Sigmoid colon (tissue), 7 donors: ENCODE measurements at regions of chr1 and their contacts with region 1.

Region 1: DNA sequence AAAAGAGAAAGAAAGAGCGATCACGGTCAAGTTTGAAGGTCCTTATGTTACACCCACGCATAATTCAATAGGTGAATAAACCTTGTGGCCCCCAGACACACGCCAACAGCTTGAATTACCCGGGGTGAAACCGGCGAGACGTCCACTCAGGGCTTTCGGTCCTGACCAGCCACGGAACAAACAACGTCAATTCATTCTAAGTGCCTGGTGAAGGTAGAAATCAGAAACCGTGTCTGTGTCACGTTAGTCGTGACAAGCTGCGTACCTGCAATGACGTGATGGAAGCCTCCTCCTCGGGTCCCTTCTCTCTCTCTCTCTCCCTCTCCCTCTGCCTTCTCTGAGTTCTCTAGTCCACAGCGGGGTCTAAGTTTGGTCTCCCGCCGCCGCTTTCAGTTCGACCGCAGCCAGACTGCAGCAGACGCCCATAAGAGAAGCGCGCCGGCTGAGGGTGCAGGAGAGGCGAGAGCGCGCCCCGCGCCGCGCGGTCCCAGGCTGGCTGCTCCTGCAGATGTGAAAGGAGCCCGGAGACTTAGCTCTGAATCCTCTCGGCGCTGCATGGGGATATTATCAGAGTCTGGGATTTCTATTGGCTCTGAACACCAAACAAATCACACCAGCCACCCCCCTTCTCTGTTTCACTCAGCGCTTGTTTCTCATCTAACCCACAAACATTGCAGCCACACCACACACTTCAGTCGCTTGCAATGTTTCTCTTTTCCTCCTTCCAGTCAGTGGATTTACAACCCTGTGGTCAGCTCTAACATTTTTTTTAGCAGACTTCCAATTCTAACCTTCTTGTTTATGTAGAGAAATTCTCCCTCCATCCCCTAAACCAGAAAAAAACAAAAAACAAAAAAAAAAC is at the start of gene GREM2:
- DNase-seq: peak; percentile 83
- H3K4me3 ChIP-seq: peak within 1 kb of the TSS; percentile 54 to 64 (median 58)
- H3K27ac ChIP-seq: peak within 1 kb of the TSS; percentile 50 to 77 (median 72)
- H3K4me1 ChIP-seq: peaks cover 0 to 36% (median 17%) of the 10 kb centered on the region in 4 donors
- H3K27me3 ChIP-seq: no peaks in the 10 kb centered on the region
- CTCF ChIP-seq: no peak
- EP300 ChIP-seq: no peak
- POLR2A ChIP-seq: peak; percentile 41 to 54
- total RNA-seq, gene GREM2: 9.4 to 18.7 (median 13.9) TPM

Region 2: GRCh38 chr1:240027059-240027462 is 584.8 kb before region 1 on chr1:
- intact Hi-C with region 1: loop called (anchors 10 kb)
- DNase-seq: no peak
- H3K4me3 ChIP-seq: no peak overlapping the region
- H3K27ac ChIP-seq: no peak overlapping the region
- H3K4me1 ChIP-seq: peaks cover 0 to 6% (median 0%) of the 10 kb centered on the region in 4 donors
- H3K27me3 ChIP-seq: no peaks in the 10 kb centered on the region
- CTCF ChIP-seq: peak; percentile 59 to 85 (median 78)
- EP300 ChIP-seq: no peak
- POLR2A ChIP-seq: no peak

Region 3: GRCh38 chr1:240344918-240345317 is 266.9 kb before region 1 on chr1:
- intact Hi-C with region 1: loop called (anchors 10 kb)
- DNase-seq: no peak
- H3K4me3 ChIP-seq: no peak overlapping the region
- H3K27ac ChIP-seq: peak overlapping the region in 1 of 4 donors; percentile 75
- H3K4me1 ChIP-seq: peaks cover 0 to 37% (median 19%) of the 10 kb centered on the region in 4 donors
- H3K27me3 ChIP-seq: no peaks in the 10 kb centered on the region
- CTCF ChIP-seq: no peak
- EP300 ChIP-seq: no peak
- POLR2A ChIP-seq: no peak

Region 4: DNA sequence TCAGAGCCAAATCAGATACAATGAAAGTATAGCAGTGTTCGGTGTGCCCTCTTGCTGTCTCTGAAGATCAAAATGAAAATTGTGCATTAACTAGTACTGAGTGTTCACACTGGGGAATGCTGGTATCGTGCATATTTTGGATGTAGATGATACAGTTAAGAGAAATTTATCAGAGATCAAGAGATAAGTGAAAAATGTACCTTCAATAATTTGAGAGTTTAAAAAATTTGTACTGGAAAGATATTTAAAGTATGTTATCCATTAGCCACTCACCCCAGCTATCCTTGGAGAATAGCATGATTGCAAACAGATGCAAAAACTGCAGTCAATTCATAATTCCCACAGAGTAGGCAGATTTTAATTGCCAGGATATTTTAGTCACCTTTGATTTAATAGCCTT is 56.3 kb before region 1 on chr1:
- intact Hi-C with region 1: no loop called
- DNase-seq: no peak
- H3K4me3 ChIP-seq: no peak overlapping the region
- H3K27ac ChIP-seq: no peak overlapping the region
- H3K4me1 ChIP-seq: peaks cover 0 to 5% (median 2%) of the 10 kb centered on the region in 4 donors
- H3K27me3 ChIP-seq: no peaks in the 10 kb centered on the region
- CTCF ChIP-seq: no peak
- EP300 ChIP-seq: no peak
- POLR2A ChIP-seq: no peak

Region 5: DNA sequence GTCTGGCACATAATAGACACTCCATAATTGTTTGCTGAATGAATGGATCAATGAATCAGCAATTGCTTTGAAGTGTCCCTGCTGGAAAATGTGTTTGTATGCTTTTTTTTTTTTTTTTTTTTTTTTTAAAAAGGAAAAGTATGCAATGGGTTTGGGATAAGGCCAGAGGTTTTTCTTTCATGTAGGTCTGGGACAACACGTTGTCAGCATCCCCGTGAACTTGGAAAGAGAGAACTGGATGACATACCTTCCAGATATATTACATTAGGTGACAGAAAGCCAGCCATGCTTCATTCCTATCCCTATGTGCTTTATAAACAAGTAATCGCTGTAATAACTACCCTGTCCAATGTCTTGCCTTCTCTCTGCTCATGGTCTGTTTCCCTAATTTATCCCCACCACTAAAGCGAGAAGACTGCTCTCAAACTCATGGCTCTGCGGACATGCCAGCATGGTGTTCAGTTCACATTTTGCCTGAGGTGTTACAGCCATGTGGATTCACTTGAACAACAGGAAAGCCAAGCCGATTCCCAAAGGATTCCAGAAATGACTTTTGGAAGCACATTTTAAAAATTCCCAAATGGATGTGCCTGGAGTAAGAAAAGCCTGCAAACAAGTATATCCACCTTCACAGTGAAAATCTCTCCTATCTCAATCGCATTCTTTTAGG is 34.9 kb after region 1 on chr1:
- intact Hi-C with region 1: no loop called
- DNase-seq: no peak
- H3K4me3 ChIP-seq: no peak overlapping the region
- H3K27ac ChIP-seq: no peak overlapping the region
- H3K4me1 ChIP-seq: no peaks in the 10 kb centered on the region
- H3K27me3 ChIP-seq: no peaks in the 10 kb centered on the region
- CTCF ChIP-seq: no peak
- EP300 ChIP-seq: no peak
- POLR2A ChIP-seq: no peak

Region 6: DNA sequence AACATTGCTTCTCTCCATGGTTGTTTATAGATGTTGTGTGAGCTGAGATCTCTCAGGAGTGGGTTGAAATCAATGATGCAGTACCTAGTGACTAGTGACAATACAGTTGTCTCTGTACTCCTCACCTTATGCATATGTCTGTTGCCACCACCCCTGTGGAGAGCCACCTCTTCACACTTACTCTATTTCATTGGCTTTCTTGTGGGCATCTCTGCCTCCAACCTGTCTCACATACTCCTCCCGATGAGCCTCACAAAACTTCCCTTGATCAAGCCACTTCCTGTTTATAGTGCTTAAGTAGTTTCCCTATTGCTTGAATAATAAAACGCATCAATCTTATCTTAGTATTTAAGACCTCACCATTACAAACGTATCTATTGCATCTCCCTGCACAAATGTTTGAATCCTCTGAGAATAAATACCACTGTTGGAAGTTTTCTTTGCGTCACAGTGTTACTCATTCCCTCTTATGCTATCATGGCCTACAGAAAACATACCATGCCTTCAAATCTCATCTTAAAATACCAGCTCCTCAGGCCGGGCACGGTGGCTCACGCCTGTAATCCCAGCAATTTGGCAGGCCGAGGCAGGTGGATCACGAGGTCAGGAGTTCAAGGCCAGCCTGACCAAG is 54.8 kb after region 1 on chr1:
- intact Hi-C with region 1: loop called (anchors 2 kb)
- DNase-seq: no peak
- H3K4me3 ChIP-seq: no peak overlapping the region
- H3K27ac ChIP-seq: peak overlapping the region in 3 of 4 donors; percentile 21 to 70 (median 44)
- H3K4me1 ChIP-seq: peaks cover 0 to 8% (median 0%) of the 10 kb centered on the region in 4 donors
- H3K27me3 ChIP-seq: no peaks in the 10 kb centered on the region
- CTCF ChIP-seq: no peak
- EP300 ChIP-seq: no peak
- POLR2A ChIP-seq: no peak

Region 7: GRCh38 chr1:240691521-240692338 is 79.9 kb after region 1 on chr1:
- intact Hi-C with region 1: loop called (anchors 5 kb)
- DNase-seq: peak; percentile 69
- H3K4me3 ChIP-seq: peak overlapping the region in 2 of 4 donors; percentile 12 to 15
- H3K27ac ChIP-seq: peak overlapping the region; percentile 14 to 72 (median 67)
- H3K4me1 ChIP-seq: peaks cover 0 to 36% (median 33%) of the 10 kb centered on the region in 4 donors
- H3K27me3 ChIP-seq: no peaks in the 10 kb centered on the region
- CTCF ChIP-seq: peak; percentile 69 to 88 (median 74)
- EP300 ChIP-seq: no peak
- POLR2A ChIP-seq: no peak

Region 8: GRCh38 chr1:241081473-241081872 is 469.6 kb after region 1 on chr1:
- intact Hi-C with region 1: no loop called
- DNase-seq: no peak
- H3K4me3 ChIP-seq: no peak overlapping the region
- H3K27ac ChIP-seq: no peak overlapping the region
- H3K4me1 ChIP-seq: no peaks in the 10 kb centered on the region
- H3K27me3 ChIP-seq: no peaks in the 10 kb centered on the region
- CTCF ChIP-seq: no peak
- EP300 ChIP-seq: no peak
- POLR2A ChIP-seq: no peak